ENCODE measurements at regions of chrX and their contacts with region 1.

Region 1: GRCh38 chrX:134484039-134484438 is 24.1 kb downstream of the HPRT1 start:
- DNase-seq: no peak

Region 2: DNA sequence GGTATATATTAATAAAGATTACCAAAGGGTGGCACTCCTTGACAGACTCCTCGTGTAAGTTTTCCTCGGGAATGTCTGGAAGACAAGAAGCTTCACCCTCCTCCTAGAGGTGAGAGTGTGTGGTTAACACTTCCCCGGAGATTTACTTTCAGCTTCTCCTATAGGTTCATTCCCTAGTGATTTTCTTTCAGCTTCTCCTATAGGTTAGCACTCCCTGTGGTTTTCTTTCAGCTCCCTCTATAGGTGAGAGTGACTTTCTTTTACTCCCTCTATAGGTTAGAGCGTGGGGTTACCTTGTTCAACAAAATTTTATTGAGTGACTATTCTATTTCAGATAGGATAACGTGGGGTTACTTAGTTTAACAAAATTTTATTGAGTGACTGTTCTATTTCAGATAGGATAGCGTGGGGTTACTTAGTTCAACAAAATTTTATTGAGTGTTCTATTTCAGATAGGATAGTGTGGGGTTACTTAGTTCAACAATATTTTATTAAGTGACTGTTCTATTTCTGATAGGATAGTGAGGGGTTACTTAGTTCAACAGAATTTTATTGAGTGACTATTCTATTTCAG is 280.3 kb after region 1 on chrX:
- intact Hi-C with region 1: loop called (anchors 10 kb)
- DNase-seq: no peak